ENCODE measurements at regions of chr16 and their contacts with region 1.

Region 1: GRCh38 chr16:85303357-85303901 is 191.2 kb upstream of the CIBAR2 start:
- DNase-seq: peak; percentile 87
- H3K4me3 Mint-ChIP-seq: peak overlapping the region; percentile 74
- H3K27ac Mint-ChIP-seq: peak overlapping the region; percentile 71
- H3K4me1 Mint-ChIP-seq: peaks cover 51% of the 10 kb centered on the region
- H3K27me3 Mint-ChIP-seq: peaks cover 16% of the 10 kb centered on the region

Region 2: DNA sequence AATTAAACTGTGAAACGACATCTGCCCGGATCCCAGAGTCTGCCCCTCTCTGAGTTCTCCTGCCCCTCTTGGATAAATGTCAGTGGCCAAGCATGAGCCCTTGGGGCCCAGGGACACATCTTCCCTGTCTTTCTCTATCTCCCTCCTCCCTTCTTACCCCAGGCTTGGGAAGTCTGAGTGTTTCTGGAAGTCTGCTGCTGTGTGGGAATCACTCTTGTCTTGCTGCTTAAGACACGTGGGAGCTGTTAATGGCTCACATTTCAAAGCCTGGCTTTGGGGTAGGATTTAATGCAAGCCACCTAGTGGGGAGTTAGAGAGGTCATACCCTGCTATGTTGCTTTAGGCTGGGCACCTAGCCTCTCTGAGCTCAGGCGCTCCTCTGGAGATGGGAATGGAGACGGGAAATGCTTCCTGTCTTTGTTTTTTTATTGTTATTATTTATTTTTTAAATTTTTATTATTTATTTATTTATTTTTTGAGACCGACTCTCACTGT is 27.3 kb after region 1 on chr16:
- CTCF ChIA-PET with region 1: interaction called, 11 read pairs
- DNase-seq: peak; percentile 36
- H3K4me3 Mint-ChIP-seq: no peak overlapping the region
- H3K27ac Mint-ChIP-seq: no peak overlapping the region
- H3K4me1 Mint-ChIP-seq: peaks cover 16% of the 10 kb centered on the region
- H3K27me3 Mint-ChIP-seq: peaks cover 51% of the 10 kb centered on the region

Measured in activated naive CD4-positive, alpha-beta T cell treated with anti-CD3 and anti-CD28 coated beads, Interleukin-2, amount 10 ng/mL, durations not matched to agents 7 days and 5 days (primary cell).